ENCODE measurements at regions of chr21 and their contacts with region 1.

Region 1: DNA sequence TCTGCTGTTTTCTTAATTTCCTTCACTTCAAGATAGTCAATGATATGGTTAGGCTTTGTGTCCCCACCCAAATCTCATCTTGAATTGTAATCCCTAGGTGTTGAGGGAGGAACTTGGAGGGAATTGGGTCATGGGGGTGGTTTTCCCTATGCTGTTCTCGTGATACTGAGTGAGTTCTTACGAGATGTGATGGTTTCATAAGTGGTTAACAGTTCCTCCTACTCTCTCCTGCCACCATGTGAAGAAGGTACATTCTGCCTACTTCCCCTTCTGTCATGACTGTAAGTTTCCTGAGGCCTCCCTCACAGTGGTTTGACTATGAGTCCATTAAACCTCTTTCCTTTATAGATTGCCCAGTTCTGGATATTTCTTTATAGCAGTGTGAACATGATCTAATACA is 74.0 kb upstream of the SAMSN1 start:
- DNase-seq: peak; percentile 4
- H3K4me3 Mint-ChIP-seq: no peak overlapping the region
- H3K27ac Mint-ChIP-seq: peak overlapping the region; percentile 74
- H3K4me1 Mint-ChIP-seq: peaks cover 37% of the 10 kb centered on the region
- H3K27me3 Mint-ChIP-seq: peaks cover 3% of the 10 kb centered on the region

Region 2: DNA sequence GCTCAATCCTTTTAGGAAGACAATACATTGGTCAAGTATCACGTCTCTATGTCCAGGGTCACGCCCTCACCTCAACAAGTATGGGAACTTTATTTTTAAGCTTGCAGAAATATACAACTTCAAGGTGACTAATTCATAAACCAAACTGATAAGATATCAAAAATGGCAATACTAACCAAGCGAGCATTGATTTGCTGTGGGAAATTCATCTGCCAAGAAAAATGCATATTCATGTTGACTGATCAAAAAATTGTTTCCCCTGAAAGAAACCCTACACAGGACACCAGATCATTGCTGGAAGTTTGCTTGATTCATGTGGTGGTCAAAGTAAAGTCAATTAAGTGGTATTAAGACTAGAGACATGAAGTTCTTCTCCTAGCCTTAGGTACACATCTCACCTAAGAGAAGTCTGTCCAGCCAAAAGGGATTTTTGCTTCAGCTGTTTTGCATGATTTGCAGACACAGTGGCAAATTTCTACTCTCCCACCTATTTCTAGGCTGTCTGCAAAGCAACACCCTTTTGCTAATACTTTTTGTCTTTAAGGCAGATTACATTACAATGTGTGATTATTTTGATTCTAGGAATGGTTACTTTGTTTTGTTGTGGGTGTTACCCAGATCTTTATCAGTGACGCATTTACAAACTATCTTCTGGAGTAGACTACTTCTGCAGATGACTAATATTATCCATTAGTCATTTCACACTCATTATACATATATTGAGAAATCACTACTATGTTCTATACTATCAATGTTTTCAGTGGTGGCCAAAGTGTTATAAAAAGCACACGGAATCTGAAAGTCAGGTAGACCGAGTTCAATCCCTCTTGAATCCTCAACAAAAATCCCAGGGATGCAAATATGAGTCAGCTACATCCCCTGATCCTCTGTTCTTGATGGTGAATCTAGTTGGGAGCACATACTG is 86.4 kb before region 1 on chr21:
- intact Hi-C with region 1: loop called (anchors 1 kb)
- DNase-seq: peak; percentile 22
- H3K4me3 Mint-ChIP-seq: peak overlapping the region; percentile 86
- H3K27ac Mint-ChIP-seq: peak overlapping the region; percentile 99
- H3K4me1 Mint-ChIP-seq: peaks cover 79% of the 10 kb centered on the region
- H3K27me3 Mint-ChIP-seq: no peaks in the 10 kb centered on the region

Region 3: GRCh38 chr21:14602382-14602958 is 17.7 kb before region 1 on chr21:
- intact Hi-C with region 1: loop called (anchors 2 kb)
- DNase-seq: no peak
- H3K4me3 Mint-ChIP-seq: peak overlapping the region; percentile 63
- H3K27ac Mint-ChIP-seq: peak overlapping the region; percentile 10
- H3K4me1 Mint-ChIP-seq: peaks cover 38% of the 10 kb centered on the region
- H3K27me3 Mint-ChIP-seq: no peaks in the 10 kb centered on the region

Region 4: DNA sequence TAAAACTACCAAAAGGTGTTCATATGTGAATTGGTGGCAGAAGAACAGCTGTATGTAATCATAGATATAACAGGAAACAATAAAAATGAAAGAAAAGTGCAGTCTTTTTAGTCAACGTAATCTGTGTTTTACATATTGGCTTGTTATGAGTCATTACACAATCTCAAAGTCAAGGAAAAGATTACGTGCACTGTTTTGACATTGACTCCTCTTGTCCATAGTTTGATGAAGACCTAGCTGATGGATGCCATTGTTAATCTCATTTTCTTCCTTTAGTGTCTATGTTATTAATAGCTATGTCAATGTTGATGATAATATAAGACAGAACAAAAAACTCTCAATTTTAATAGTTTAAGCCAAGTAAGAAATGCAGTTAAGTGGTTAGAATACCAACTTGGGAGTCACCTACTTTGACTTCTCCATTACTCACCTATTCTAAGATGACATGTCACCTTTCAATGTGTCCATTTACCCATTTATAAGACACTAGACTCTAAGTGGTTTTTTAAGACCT is 10.5 kb after region 1 on chr21:
- intact Hi-C with region 1: loop called (anchors 1 kb)
- DNase-seq: no peak
- H3K4me3 Mint-ChIP-seq: no peak overlapping the region
- H3K27ac Mint-ChIP-seq: peak overlapping the region; percentile 72
- H3K4me1 Mint-ChIP-seq: peaks cover 14% of the 10 kb centered on the region
- H3K27me3 Mint-ChIP-seq: peaks cover 2% of the 10 kb centered on the region

Region 5: GRCh38 chr21:14645702-14646101 is 25.6 kb after region 1 on chr21:
- intact Hi-C with region 1: no loop called
- DNase-seq: no peak
- H3K4me3 Mint-ChIP-seq: no peak overlapping the region
- H3K27ac Mint-ChIP-seq: no peak overlapping the region
- H3K4me1 Mint-ChIP-seq: no peaks in the 10 kb centered on the region
- H3K27me3 Mint-ChIP-seq: no peaks in the 10 kb centered on the region

Region 6: GRCh38 chr21:14787312-14787711 is 167.2 kb after region 1 on chr21:
- intact Hi-C with region 1: no loop called
- DNase-seq: no peak
- H3K4me3 Mint-ChIP-seq: no peak overlapping the region
- H3K27ac Mint-ChIP-seq: no peak overlapping the region
- H3K4me1 Mint-ChIP-seq: no peaks in the 10 kb centered on the region
- H3K27me3 Mint-ChIP-seq: no peaks in the 10 kb centered on the region

Measured in activated T-helper 1 cell treated with anti-CD3 and anti-CD28 coated beads, Interleukin-12 subunit alpha, Interleukin-12 subunit beta, Interleukin-2, Interleukin-4 antibody, amounts not matched to agents 30 ng/mL and 10 ng/mL and 1 ng/mL, durations not matched to agents 14 hours and 24 hours and 36 hours (primary cell).